ENCODE measurements at regions of chr19 and their contacts with region 1.

Region 1: GRCh38 chr19:40465557-40466150 is at the start of gene BLVRB:
- DNase-seq: peak; percentile 100
- H3K4me3 Mint-ChIP-seq: peak within 1 kb of the TSS; percentile 99
- H3K27ac Mint-ChIP-seq: peak within 1 kb of the TSS; percentile 83
- H3K4me1 Mint-ChIP-seq: peaks cover 32% of the 10 kb centered on the region
- H3K27me3 Mint-ChIP-seq: peaks cover 17% of the 10 kb centered on the region
- CTCF ChIP-seq: no peak
- total RNA-seq, gene BLVRB: 107 and 118 TPM in 2 replicates

Region 2: DNA sequence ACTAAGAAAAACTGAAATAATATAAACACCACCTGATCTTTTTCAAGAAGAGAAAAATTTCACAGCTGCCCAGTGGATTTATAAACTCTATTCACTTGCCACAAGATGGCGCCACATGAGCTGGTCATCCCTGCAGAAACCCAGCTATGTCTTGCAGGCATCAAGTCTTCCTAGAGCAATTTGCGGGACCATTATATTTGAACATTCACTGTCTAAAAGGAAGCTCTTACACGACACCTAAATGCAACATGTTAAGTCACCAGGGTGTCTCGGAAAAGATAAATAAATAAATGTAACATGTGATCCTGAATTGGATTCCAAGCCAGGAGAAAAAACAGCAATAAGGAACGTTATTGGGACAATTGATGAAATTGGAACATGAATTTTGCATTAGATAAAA is 160.3 kb before region 1 on chr19:
- CTCF ChIA-PET with region 1: interaction called, 12 read pairs
- intact Hi-C with region 1: no loop called
- DNase-seq: peak; percentile 83
- H3K4me3 Mint-ChIP-seq: no peak overlapping the region
- H3K27ac Mint-ChIP-seq: no peak overlapping the region
- H3K4me1 Mint-ChIP-seq: no peaks in the 10 kb centered on the region
- H3K27me3 Mint-ChIP-seq: no peaks in the 10 kb centered on the region
- CTCF ChIP-seq: peak; percentile 88

Region 3: GRCh38 chr19:40398417-40399131 is 67.1 kb before region 1 on chr19:
- CTCF ChIA-PET with region 1: no interaction called
- intact Hi-C with region 1: no loop called
- DNase-seq: no peak
- H3K4me3 Mint-ChIP-seq: no peak overlapping the region
- H3K27ac Mint-ChIP-seq: no peak overlapping the region
- H3K4me1 Mint-ChIP-seq: peaks cover 19% of the 10 kb centered on the region
- H3K27me3 Mint-ChIP-seq: peaks cover 15% of the 10 kb centered on the region
- CTCF ChIP-seq: no peak

Region 4: GRCh38 chr19:40433391-40434216 is 32.0 kb before region 1 on chr19:
- CTCF ChIA-PET with region 1: interaction called, 11 read pairs
- intact Hi-C with region 1: no loop called
- DNase-seq: peak; percentile 92
- H3K4me3 Mint-ChIP-seq: peak overlapping the region; percentile 71
- H3K27ac Mint-ChIP-seq: peak overlapping the region; percentile 69
- H3K4me1 Mint-ChIP-seq: peaks cover 13% of the 10 kb centered on the region
- H3K27me3 Mint-ChIP-seq: no peaks in the 10 kb centered on the region
- CTCF ChIP-seq: no peak

Region 5: DNA sequence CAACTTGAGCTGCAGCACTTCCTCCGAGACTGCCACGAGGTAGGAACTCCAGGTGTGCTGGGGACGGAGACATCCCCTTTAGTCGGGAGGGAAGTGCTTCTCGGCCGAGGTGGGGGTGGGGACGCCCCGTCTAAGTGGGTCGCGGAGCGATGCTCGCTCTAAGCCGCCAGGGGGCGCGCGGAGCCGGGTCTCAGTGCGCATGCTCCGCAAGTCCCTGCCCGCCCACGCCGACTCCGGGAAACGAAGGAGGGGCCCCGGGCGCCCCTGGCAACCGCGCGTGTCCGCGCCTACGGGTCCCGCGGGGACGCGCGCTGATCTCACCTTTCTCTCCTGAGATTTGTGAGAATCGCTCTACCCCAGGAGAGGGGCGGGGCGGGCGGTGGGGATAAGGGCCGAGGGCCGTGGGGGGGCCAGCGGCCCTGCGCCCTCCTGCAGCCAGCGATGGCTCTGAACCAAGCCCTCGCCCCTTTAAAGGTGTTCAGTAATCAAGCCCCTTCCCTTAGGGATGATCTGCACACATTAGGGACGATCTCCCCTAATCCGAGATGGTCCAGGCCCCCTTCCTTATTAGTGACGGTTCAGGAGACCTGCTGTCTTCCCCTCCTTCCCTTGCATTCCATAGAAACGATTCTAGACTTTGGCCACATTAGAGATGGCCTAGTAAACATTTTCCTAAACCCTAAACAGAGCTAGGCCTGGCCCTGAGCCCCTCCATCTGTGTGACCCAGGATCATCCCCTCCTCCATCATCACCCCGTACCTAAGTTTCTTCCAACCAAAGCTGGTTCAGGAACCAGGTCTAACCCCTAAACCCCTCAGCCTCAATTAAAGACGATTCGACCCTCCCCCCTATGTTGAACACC is 63.7 kb after region 1 on chr19:
- CTCF ChIA-PET with region 1: interaction called, 3 read pairs
- intact Hi-C with region 1: loop called (anchors 5 kb)
- DNase-seq: peak; percentile 93
- H3K4me3 Mint-ChIP-seq: peak overlapping the region; percentile 57
- H3K27ac Mint-ChIP-seq: no peak overlapping the region
- H3K4me1 Mint-ChIP-seq: peaks cover 17% of the 10 kb centered on the region
- H3K27me3 Mint-ChIP-seq: peaks cover 78% of the 10 kb centered on the region
- CTCF ChIP-seq: peak; percentile 96

Region 6: DNA sequence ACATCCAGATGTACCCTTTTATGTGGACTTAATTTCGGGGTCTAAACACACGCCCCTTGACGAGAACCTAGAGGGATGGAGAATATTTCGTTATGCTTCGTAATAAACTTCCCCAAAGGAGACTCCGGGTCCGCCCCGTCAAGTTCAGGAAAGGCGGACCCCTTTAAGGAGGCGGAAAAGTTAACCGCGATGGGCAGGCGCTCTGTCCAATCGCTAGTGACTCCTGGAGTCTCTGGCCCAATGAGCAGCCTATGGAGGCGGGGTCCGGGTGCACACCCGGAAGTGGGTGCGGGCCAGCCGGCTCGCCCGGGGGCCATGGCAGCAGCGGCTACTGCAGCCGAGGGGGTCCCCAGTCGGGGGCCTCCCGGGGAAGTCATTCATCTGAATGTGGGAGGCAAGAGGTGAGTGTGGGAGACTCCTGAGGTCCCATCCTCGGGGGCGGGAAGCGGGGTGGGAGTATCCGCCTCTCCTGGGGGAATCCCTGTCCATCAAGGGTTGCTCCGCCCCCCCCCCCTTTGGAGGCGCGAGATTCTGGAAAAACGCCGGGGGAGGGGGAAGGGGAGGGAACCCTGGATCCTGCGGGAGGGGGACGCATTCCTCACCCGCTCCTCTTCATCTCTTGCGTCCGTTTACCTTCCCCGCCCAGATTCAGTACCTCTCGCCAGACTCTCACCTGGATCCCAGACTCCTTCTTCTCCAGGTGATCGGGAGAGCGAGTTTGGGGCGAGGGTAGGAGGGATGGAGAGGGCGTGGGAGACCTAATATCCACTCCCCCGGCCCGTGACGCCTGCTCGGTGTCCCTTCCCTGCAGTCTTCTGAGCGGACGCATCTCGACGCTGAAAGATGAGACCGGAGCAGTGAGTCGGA is 111.2 kb after region 1 on chr19 and contains the start of gene SHKBP1:
- CTCF ChIA-PET with region 1: no interaction called
- intact Hi-C with region 1: no loop called
- DNase-seq: peak; percentile 97
- H3K4me3 Mint-ChIP-seq: peak within 1 kb of the TSS; percentile 95
- H3K27ac Mint-ChIP-seq: peak within 1 kb of the TSS; percentile 68
- H3K4me1 Mint-ChIP-seq: peaks cover 13% of the 10 kb centered on the region
- H3K27me3 Mint-ChIP-seq: no peaks in the 10 kb centered on the region
- CTCF ChIP-seq: no peak
- total RNA-seq, gene SHKBP1: 117 TPM in 2 replicates

Region 7: GRCh38 chr19:40598121-40598917 is 132.7 kb after region 1 on chr19:
- CTCF ChIA-PET with region 1: interaction called, 20 read pairs
- intact Hi-C with region 1: loop called (anchors 10 kb)
- DNase-seq: peak; percentile 95
- H3K4me3 Mint-ChIP-seq: no peak overlapping the region
- H3K27ac Mint-ChIP-seq: no peak overlapping the region
- H3K4me1 Mint-ChIP-seq: peaks cover 60% of the 10 kb centered on the region
- H3K27me3 Mint-ChIP-seq: peaks cover 67% of the 10 kb centered on the region
- CTCF ChIP-seq: peak; percentile 97

Region 8: GRCh38 chr19:40633207-40633606 is 167.6 kb after region 1 on chr19:
- CTCF ChIA-PET with region 1: interaction called, 23 read pairs
- intact Hi-C with region 1: no loop called
- DNase-seq: no peak
- H3K4me3 Mint-ChIP-seq: no peak overlapping the region
- H3K27ac Mint-ChIP-seq: no peak overlapping the region
- H3K4me1 Mint-ChIP-seq: peaks cover 9% of the 10 kb centered on the region
- H3K27me3 Mint-ChIP-seq: peaks cover 24% of the 10 kb centered on the region
- CTCF ChIP-seq: no peak

Region 9: DNA sequence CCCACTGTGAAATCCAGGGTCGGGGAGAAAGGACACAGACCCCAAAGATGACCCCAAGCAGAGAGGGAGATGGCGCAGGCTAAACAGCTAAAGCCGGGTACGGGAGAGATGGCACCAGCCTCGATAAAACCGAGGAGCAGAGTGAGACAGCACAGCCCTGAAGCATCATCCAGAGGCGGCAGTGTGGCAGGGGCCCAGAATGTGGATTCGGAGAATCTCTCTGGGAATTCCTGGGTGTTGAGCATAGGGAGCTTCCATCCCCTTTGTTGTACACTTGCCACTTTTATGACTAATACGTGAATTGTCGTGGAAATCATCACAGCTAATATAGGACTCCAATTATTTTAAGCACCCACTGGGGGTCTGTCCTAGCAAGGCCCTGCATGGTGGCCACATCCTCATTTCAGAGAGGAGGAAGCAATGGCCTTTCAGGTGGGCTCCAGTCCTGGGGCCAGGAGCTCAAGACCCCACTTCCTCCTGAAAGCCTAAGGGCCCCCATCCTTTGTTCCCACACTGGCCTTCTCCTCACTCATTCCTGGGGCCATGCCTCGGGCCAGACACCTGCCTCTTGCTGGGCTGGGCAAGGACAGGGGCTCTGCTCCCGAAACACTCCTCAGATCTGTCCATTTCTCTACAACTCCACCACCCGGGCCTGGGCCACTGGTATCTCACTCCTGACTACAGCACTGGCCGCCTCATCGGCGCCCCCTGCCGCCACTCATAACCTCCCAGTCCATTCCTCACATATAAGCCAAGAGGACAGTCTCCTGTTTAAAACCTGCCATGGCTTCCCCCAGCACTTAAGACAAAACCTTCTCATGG is 1557.7 kb after region 1 on chr19:
- CTCF ChIA-PET with region 1: no interaction called
- intact Hi-C with region 1: no loop called
- DNase-seq: peak; percentile 54
- H3K4me3 Mint-ChIP-seq: no peak overlapping the region
- H3K27ac Mint-ChIP-seq: no peak overlapping the region
- H3K4me1 Mint-ChIP-seq: no peaks in the 10 kb centered on the region
- H3K27me3 Mint-ChIP-seq: peaks cover 97% of the 10 kb centered on the region
- CTCF ChIP-seq: peak; percentile 47